Naive thymus-derived CD8-positive, alpha-beta T cell (primary cell): ENCODE measurements at regions of chr1 and their contacts with region 1.

Region 1: DNA sequence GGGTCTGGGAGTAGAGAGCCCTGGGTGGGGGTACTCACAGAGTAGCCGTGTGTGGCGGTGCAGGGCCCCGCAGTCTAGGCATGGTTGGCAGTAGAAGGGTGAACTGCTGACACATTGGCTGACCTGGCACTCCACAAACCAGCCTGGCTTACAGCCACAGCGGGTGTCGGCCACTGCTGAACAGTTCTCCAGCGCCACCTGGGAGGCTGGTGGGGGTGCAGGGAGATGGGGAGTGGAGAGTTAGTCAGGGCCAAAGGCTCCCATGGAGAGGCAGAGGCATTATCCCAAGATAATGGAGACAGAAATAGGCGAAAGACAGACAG is 1.5 kb downstream of the TNFRSF25 start:
- DNase-seq: no peak
- ATAC-seq: no peak
- H3K4me3 Mint-ChIP-seq: peak overlapping the region; percentile 88 to 97 (median 91)
- H3K27ac Mint-ChIP-seq: peak overlapping the region; percentile 87 to 96 (median 92)
- H3K4me1 Mint-ChIP-seq: peaks cover 29 to 57% (median 48%) of the 10 kb centered on the region in 4 donors
- H3K27me3 Mint-ChIP-seq: peaks cover 0 to 4% (median 0%) of the 10 kb centered on the region in 5 donors

Region 2: DNA sequence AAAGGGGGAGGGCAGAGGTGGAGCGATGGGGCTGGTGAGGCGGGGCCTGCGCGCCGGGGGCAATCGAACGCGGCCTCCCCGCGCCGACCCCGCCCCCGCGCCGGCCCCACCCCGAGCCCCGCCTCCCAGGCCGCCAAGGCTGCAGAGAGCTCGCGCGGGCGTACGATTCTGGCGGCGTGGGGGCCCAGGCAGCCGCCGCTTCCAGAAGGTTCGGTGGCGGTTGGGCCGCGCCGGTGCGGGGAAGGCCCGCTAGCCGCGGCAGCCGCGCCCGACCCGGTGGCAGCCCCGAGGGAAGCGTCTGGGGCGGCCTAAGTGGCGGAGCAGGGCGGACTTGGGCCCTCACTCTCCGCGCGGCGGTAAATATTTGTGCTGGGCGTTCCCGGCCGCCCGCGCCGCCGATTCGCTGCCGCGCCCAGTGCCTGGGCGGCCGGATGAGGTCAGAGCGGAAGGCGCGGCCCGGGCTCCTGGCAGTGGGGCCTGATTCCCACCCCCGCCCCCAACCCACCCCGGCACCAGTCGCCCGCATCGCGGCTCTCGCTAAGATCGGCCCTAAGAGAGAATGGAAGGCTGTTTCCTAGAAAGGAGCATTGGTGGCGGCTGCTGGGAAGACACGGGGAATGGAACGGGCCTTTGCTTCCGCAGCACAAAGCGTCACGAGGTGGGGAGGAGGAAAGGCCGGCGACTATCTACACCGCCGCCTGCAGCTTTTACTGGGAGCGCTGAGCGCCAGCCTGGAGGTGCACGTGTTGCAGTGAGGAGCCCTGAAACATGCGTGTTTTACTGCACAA is 70.9 kb before region 1 on chr1 and contains the start of gene ACOT7:
- POLR2A ChIA-PET with region 1: interaction called, 15 read pairs
- DNase-seq: peak; percentile 82 to 94 (median 90)
- ATAC-seq: peak; percentile 87 to 88
- H3K4me3 Mint-ChIP-seq: peak within 1 kb of the TSS; percentile 73 to 91 (median 90)
- H3K27ac Mint-ChIP-seq: peak within 1 kb of the TSS; percentile 76 to 97 (median 95)
- H3K4me1 Mint-ChIP-seq: peaks cover 18 to 34% (median 27%) of the 10 kb centered on the region in 4 donors
- H3K27me3 Mint-ChIP-seq: no peaks in the 10 kb centered on the region
- polyA plus RNA-seq, gene ACOT7: 5.6 to 9.4 (median 7.8) TPM

Region 3: GRCh38 chr1:6445062-6445763 is 19.3 kb before region 1 on chr1:
- POLR2A ChIA-PET with region 1: interaction called, 58 read pairs
- DNase-seq: peak in 1 of 10 donors; percentile 46
- ATAC-seq: no peak
- H3K4me3 Mint-ChIP-seq: peak overlapping the region in 3 of 10 donors; percentile 14 to 56 (median 48)
- H3K27ac Mint-ChIP-seq: peak overlapping the region in 1 of 10 donors; percentile 70
- H3K4me1 Mint-ChIP-seq: peaks cover 12 to 29% (median 19%) of the 10 kb centered on the region in 4 donors
- H3K27me3 Mint-ChIP-seq: peaks cover 15 to 65% (median 24%) of the 10 kb centered on the region in 5 donors